Posterior vena cava (tissue), 2 donors: ENCODE measurements at regions of chr20 and their contacts with region 1.

Region 1: DNA sequence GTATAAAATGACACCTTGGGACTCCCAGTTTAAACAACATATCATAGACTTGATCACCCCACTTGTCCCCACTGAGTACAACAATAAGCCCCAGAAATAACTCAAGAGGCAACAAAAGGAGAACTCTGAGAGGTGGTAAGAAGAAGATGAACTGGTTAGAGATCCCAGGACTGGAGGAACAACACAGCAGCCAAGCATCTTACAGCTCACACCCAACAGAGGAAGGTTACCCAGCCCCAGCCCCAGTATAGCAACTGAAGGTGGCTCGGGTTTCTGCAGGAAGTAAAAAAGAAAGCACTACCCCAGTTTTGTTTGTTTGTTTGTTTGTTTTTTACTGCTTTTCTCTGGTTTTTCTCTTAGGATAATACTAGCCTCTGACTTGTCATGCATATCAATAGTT is 17.1 kb upstream of the TGM6 start:
- DNase-seq: no peak

Region 2: DNA sequence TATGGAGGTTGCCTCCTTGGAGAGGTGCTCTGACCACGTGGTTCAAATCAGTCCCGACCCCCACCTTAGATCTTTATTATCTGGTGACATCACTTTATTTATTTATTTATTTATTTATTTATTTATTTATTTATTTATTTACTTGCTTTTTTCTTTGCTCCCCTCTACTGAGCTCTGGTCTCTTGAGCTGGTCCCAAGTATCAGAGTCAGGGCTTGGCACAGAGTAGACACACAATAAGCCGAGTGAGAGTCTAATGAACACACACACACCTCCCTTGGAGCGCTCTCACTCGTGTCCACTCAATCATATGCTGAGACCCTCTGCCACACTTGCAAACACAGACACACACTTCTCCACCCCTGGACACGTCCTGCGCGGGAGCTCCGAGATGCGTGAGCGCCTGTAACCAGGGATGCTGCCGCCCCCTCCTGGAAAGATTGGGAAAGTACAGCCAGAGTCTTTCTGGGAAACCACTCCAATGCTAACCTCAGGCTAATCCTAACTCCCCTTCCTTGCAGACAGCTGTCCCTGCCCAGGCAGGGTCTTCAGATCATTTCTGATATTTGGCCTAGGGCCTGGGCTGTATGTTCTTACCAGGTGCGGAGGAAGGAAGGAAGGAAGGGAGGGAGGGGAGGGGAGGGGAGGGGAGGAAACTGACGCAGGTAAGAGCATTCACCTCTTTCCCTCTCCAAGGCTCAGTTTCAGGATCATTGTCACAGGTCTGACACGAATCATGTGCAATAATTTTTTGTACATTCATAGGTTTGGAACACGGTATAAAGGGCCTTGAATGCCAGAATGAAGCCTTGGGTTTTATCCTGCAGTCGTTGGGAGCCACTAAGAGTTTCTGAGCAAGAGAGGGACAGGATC is 191.0 kb before region 1 on chr20:
- intact Hi-C with region 1: no loop called
- DNase-seq: peak; percentile 90

Region 3: DNA sequence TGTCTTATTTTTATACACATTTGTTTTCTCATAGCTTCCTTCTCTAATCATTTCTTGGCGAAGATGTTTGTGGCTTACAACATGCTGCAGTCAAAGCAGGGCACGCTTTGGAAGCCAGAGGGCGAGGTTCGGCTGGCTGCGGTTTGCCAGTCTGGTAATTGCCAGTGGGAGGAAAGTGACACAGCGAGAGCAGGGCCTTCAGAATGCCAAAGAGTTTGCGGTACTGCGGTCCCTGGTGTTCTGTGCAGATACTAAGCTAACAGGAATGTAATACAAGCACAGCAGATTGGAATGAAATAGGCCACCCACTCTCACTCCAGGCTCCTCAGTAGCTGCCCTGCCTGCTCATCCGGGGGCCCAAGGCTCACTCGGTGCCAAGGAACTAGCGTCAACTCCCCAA is 126.5 kb before region 1 on chr20:
- intact Hi-C with region 1: no loop called
- DNase-seq: peak; percentile 91

Region 4: GRCh38 chr20:2333821-2334220 is 29.8 kb before region 1 on chr20:
- intact Hi-C with region 1: loop called in 1 of 2 experiments (anchors 1 kb)
- DNase-seq: peak; percentile 43

Region 5: DNA sequence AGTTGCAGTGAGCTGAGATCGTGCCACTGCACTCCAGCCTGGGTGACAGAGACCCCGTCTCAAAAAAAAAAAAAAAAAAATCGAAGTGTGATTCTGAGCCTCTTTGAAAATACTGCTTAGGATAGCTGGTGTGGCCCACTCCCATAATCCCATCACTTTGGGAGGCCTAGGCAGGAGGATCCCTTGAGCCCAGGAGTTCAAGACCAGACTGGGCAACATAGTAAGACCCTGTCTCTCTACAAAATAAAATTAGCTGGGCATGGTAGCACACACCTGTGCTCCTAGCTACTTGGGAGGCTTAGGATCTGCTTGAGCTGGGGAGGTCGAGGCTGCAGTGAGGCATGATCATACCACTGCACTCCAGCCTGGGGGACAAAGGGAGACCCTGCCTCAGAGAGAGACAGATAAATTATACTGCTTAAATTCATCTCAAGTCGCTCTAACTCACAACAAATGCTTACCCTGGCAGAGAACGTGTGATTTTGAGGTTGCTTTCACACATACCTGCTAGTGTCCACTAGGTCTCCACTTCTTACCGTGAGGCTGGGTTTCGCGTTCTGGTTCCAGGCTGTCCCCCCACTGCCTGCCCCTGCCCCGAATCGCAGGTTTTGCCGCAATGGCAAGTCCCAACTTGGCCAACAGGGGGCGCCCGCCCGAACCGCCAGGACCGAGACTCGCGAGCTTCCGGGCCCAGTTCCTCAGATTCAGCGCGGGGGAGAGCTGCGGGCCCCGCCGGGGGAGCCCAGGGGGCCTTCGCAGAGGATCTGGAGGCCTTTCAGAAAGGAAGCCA is 160.5 kb after region 1 on chr20:
- intact Hi-C with region 1: no loop called
- DNase-seq: peak; percentile 97